ENCODE measurements at regions of chr10 and their contacts with region 1.

Region 1: DNA sequence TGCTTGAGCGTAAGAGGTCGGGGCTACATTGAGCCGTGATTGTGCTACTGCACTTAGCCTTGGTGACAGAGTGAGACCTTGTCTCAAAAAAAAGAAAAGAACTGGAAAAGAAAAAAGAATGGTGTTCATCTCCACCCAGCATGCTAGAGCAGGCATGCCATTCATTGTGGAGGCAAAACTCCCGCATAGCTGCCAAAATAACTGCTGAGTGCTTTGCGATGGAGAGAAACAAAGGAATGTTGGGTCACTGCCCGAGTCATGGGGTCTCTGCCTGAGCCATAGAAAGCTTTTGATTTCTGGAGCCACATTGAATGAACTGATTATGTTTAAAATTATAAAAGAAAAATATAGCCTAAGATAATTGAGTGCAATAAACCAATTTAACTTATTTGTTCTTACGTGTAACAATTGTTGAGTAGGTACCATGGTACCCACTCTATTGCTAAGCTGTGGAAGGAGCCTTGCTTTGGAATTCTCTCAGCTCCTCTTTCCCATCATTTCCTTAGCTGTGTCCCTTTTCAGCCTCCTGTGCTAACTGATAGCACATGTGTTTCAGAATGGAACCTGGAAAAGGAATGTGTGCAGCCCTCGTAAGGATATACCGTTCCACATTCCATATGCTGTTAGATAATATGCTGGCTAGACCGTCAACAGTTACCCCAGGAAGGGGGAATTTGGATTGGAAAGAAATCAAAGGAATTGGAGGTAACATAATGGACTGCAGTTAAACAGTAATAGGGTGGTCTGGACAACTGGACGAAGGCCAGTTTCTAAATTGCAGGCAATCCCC is 99.0 kb downstream of the KIAA1217 start:
- DNase-seq: no peak
- H3K4me3 ChIP-seq: no peak overlapping the region
- CTCF ChIP-seq: no peak

Region 2: GRCh38 chr10:23613900-23614299 is 694.0 kb before region 1 on chr10:
- CTCF ChIA-PET with region 1: no interaction called
- POLR2A ChIA-PET with region 1: no interaction called
- DNase-seq: no peak
- H3K4me3 ChIP-seq: no peak overlapping the region
- CTCF ChIP-seq: no peak

Region 3: GRCh38 chr10:24238519-24239252 is 69.2 kb before region 1 on chr10:
- CTCF ChIA-PET with region 1: no interaction called
- POLR2A ChIA-PET with region 1: no interaction called
- DNase-seq: no peak
- H3K4me3 ChIP-seq: no peak overlapping the region
- CTCF ChIP-seq: no peak

Region 4: GRCh38 chr10:24277771-24278170 is 30.1 kb before region 1 on chr10:
- CTCF ChIA-PET with region 1: no interaction called
- POLR2A ChIA-PET with region 1: no interaction called
- DNase-seq: no peak
- H3K4me3 ChIP-seq: no peak overlapping the region
- CTCF ChIP-seq: no peak

Region 5: GRCh38 chr10:24318517-24318916 is 10.6 kb after region 1 on chr10:
- CTCF ChIA-PET with region 1: interaction called, 22 read pairs
- POLR2A ChIA-PET with region 1: no interaction called
- DNase-seq: no peak
- H3K4me3 ChIP-seq: no peak overlapping the region
- CTCF ChIP-seq: no peak